Activated CD8-positive, alpha-beta T cell treated with anti-CD3 and anti-CD28 coated beads for 36 hours (primary cell): ENCODE measurements at regions of chr14 and their contacts with region 1.

Region 1: GRCh38 chr14:91996948-91997371 is 42.9 kb downstream of the TRIP11 start:
- DNase-seq: no peak
- ATAC-seq: peak; percentile 68
- H3K4me3 Mint-ChIP-seq: no peak overlapping the region
- H3K27ac Mint-ChIP-seq: peak overlapping the region; percentile 19
- H3K4me1 Mint-ChIP-seq: peaks cover 45% of the 10 kb centered on the region
- H3K27me3 Mint-ChIP-seq: no peaks in the 10 kb centered on the region
- CTCF ChIP-seq: peak; percentile 82

Region 2: GRCh38 chr14:91649930-91650329 is 347.0 kb before region 1 on chr14:
- CTCF ChIA-PET with region 1: interaction called, 16 read pairs
- POLR2A ChIA-PET with region 1: no interaction called
- intact Hi-C with region 1: no loop called
- DNase-seq: peak; percentile 55
- ATAC-seq: peak; percentile 68
- H3K4me3 Mint-ChIP-seq: no peak overlapping the region
- H3K27ac Mint-ChIP-seq: no peak overlapping the region
- H3K4me1 Mint-ChIP-seq: no peaks in the 10 kb centered on the region
- H3K27me3 Mint-ChIP-seq: no peaks in the 10 kb centered on the region
- CTCF ChIP-seq: peak; percentile 80

Region 3: GRCh38 chr14:91985521-91986255 is 11.3 kb before region 1 on chr14:
- CTCF ChIA-PET with region 1: interaction called, 16 read pairs
- POLR2A ChIA-PET with region 1: interaction called, 4 read pairs
- intact Hi-C with region 1: no loop called
- DNase-seq: no peak
- ATAC-seq: no peak
- H3K4me3 Mint-ChIP-seq: no peak overlapping the region
- H3K27ac Mint-ChIP-seq: no peak overlapping the region
- H3K4me1 Mint-ChIP-seq: peaks cover 2% of the 10 kb centered on the region
- H3K27me3 Mint-ChIP-seq: no peaks in the 10 kb centered on the region
- CTCF ChIP-seq: no peak

Region 4: DNA sequence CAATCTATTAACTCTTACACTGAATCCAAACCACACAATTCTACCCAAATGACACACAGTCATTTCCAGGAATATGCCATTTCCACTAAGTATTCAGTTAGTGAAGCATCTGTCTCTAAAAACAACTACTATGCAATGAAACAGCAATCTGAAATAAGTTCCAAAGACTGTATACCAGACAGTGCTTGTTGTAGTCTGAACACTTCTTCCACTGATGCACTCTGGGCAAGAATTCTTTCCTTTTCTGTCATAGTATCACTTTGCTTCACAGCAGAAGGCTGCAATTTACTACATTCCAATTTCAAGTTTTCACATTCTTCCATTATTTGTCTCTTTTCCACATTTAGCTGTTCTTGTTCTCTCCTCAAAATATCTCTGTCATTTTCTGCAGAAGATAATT is 17.1 kb after region 1 on chr14:
- CTCF ChIA-PET with region 1: interaction called, 22 read pairs
- POLR2A ChIA-PET with region 1: no interaction called
- intact Hi-C with region 1: no loop called
- DNase-seq: no peak
- ATAC-seq: peak; percentile 55
- H3K4me3 Mint-ChIP-seq: no peak overlapping the region
- H3K27ac Mint-ChIP-seq: peak overlapping the region; percentile 62
- H3K4me1 Mint-ChIP-seq: peaks cover 26% of the 10 kb centered on the region
- H3K27me3 Mint-ChIP-seq: no peaks in the 10 kb centered on the region
- CTCF ChIP-seq: no peak